Activated CD8-positive, alpha-beta memory T cell treated with anti-CD3 and anti-CD28 coated beads, Interleukin-2, amount 10 ng/mL, durations not matched to agents 7 days and 5 days (primary cell): ENCODE measurements at regions of chr17 and their contacts with region 1.

Region 1: GRCh38 chr17:39547713-39548478 is 59.8 kb downstream of the NEUROD2 start:
- DNase-seq: peak; percentile 81
- ATAC-seq: peak; percentile 79
- H3K4me3 Mint-ChIP-seq: no peak overlapping the region
- H3K27ac Mint-ChIP-seq: peak overlapping the region; percentile 6
- H3K4me1 Mint-ChIP-seq: no peaks in the 10 kb centered on the region
- H3K27me3 Mint-ChIP-seq: no peaks in the 10 kb centered on the region

Region 2: DNA sequence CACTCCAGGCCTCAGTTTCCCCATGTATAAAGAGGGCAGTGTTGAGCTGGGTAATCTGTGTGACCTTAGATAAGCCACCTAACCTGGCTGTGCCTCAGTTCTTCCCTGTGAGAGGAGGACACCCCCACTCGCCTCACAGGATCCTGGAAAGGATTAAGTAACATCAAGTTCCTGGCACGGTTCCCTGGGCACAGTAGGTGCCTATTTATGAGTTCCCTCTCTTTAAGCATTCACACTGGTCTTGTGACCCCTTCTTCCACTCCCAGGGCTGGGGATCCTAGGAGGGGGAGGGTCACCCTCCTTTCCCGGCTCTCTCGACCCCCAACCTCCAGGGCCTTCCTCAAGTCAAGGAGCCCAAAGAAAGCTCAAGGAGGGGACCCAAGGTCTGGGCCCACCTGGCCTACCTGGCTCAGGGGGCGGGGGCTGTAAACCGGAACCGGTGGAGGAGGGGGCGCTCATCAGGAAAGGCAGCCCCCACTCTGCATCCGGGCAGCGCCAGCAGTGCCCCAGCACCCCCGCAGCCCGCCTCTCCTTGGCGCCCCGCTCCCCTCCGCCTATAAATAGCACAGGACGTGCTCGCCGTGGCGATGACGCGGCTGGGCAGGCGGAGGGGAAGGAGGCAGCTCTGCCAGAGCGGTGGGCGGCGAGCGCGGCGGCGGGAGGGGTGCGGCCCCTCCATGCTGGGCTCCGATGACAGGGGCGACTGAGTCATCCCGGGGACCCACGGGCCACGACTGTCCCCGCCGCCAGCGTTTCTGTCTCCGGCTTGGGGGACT is 338.4 kb before region 1 on chr17:
- CTCF ChIA-PET with region 1: interaction called, 11 read pairs
- DNase-seq: peak; percentile 79
- ATAC-seq: peak; percentile 65
- H3K4me3 Mint-ChIP-seq: peak overlapping the region; percentile 9
- H3K27ac Mint-ChIP-seq: no peak overlapping the region
- H3K4me1 Mint-ChIP-seq: peaks cover 12% of the 10 kb centered on the region
- H3K27me3 Mint-ChIP-seq: peaks cover 22% of the 10 kb centered on the region

Region 3: GRCh38 chr17:39473310-39473709 is 74.6 kb before region 1 on chr17:
- CTCF ChIA-PET with region 1: no interaction called
- DNase-seq: no peak
- ATAC-seq: no peak
- H3K4me3 Mint-ChIP-seq: no peak overlapping the region
- H3K27ac Mint-ChIP-seq: no peak overlapping the region
- H3K4me1 Mint-ChIP-seq: peaks cover 4% of the 10 kb centered on the region
- H3K27me3 Mint-ChIP-seq: no peaks in the 10 kb centered on the region

Region 4: GRCh38 chr17:39527220-39527813 is 20.6 kb before region 1 on chr17:
- CTCF ChIA-PET with region 1: interaction called, 16 read pairs
- DNase-seq: no peak
- ATAC-seq: no peak
- H3K4me3 Mint-ChIP-seq: no peak overlapping the region
- H3K27ac Mint-ChIP-seq: no peak overlapping the region
- H3K4me1 Mint-ChIP-seq: peaks cover 8% of the 10 kb centered on the region
- H3K27me3 Mint-ChIP-seq: no peaks in the 10 kb centered on the region